WTC11 (cell line): ENCODE measurements at regions of chr12 and their contacts with region 1.

Region 1: DNA sequence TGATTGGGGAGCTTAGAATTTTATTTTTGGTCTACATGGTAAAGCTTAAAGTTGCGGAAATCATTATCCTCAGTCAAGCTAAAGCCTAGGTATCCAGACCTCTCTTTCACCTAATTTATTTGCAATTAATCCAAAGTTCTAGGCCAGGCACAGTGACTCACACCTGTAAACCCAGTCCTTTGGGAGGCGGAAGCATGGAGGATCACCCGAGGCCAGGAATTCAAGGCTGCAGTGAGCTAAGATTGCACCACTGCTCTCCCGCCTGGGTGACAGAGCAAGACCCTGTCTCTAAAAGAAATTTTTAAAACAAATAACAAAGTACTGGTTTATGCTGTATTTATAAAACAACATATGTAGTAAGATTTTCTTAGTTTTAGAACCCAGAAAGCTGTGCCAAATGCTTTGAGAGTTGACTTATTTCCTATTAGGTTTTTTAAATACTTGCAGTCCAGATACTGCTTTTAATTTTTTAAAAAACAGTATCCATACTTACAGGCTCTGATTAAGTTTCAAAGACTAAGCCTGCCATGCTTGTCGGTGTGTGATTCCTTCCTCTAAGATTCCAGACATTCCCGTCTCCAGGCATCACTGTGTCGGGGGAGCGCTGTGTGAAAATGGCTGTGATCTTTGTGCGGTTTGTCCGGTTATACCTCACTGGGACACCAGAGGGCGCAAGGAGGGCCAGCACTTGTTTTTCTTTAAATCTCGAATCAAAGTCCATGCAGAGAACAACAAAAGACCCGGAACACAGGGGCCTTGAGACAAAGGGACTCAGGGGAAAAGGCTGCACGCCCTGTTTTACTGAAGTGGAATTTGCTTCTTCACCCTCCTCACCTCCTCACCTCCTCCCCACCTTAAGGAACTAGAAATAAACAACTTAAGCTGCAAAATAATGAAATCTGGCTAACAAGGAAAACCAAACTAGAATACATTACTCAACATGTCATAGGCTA is 24.6 kb upstream of the TMPO start:
- DNase-seq: peak; percentile 94
- ATAC-seq: peak; percentile 86
- H3K4me3 Mint-ChIP-seq: peak overlapping the region; percentile 29
- H3K27ac Mint-ChIP-seq: peak overlapping the region; percentile 98
- H3K4me1 Mint-ChIP-seq: peaks cover 60% of the 10 kb centered on the region
- H3K27me3 Mint-ChIP-seq: no peaks in the 10 kb centered on the region
- CTCF ChIP-seq: peak; percentile 82

Region 2: GRCh38 chr12:98424726-98425401 is 65.9 kb before region 1 on chr12:
- CTCF ChIA-PET with region 1: interaction called, 14 read pairs
- POLR2A ChIA-PET with region 1: no interaction called
- DNase-seq: peak; percentile 57
- ATAC-seq: peak; percentile 74
- H3K4me3 Mint-ChIP-seq: no peak overlapping the region
- H3K27ac Mint-ChIP-seq: no peak overlapping the region; the same call in 1 of the 2 replicates
- H3K4me1 Mint-ChIP-seq: peaks cover 4% of the 10 kb centered on the region
- H3K27me3 Mint-ChIP-seq: no peaks in the 10 kb centered on the region
- CTCF ChIP-seq: peak; percentile 36; the same call in 1 of the 2 replicates

Region 3: GRCh38 chr12:98464190-98464589 is 26.6 kb before region 1 on chr12:
- CTCF ChIA-PET with region 1: no interaction called
- POLR2A ChIA-PET with region 1: interaction called, 10 read pairs
- DNase-seq: no peak
- ATAC-seq: no peak
- H3K4me3 Mint-ChIP-seq: no peak overlapping the region
- H3K27ac Mint-ChIP-seq: no peak overlapping the region
- H3K4me1 Mint-ChIP-seq: no peaks in the 10 kb centered on the region
- H3K27me3 Mint-ChIP-seq: no peaks in the 10 kb centered on the region
- CTCF ChIP-seq: no peak

Region 4: GRCh38 chr12:98516184-98516873 is 25.6 kb after region 1 on chr12:
- CTCF ChIA-PET with region 1: interaction called, 16 read pairs
- POLR2A ChIA-PET with region 1: interaction called, 23 read pairs
- DNase-seq: peak; percentile 72
- ATAC-seq: peak; percentile 32
- H3K4me3 Mint-ChIP-seq: peak overlapping the region; percentile 92
- H3K27ac Mint-ChIP-seq: peak overlapping the region; percentile 95
- H3K4me1 Mint-ChIP-seq: peaks cover 50% of the 10 kb centered on the region
- H3K27me3 Mint-ChIP-seq: no peaks in the 10 kb centered on the region
- CTCF ChIP-seq: no peak; the same call in 1 of the 2 replicates

Region 5: GRCh38 chr12:98532681-98533304 is 42.0 kb after region 1 on chr12:
- CTCF ChIA-PET with region 1: interaction called, 23 read pairs
- POLR2A ChIA-PET with region 1: no interaction called
- DNase-seq: no peak
- ATAC-seq: peak; percentile 83
- H3K4me3 Mint-ChIP-seq: no peak overlapping the region
- H3K27ac Mint-ChIP-seq: no peak overlapping the region
- H3K4me1 Mint-ChIP-seq: no peaks in the 10 kb centered on the region
- H3K27me3 Mint-ChIP-seq: no peaks in the 10 kb centered on the region
- CTCF ChIP-seq: peak; percentile 68